ENCODE measurements at regions of chr17 and their contacts with region 1.

Region 1: DNA sequence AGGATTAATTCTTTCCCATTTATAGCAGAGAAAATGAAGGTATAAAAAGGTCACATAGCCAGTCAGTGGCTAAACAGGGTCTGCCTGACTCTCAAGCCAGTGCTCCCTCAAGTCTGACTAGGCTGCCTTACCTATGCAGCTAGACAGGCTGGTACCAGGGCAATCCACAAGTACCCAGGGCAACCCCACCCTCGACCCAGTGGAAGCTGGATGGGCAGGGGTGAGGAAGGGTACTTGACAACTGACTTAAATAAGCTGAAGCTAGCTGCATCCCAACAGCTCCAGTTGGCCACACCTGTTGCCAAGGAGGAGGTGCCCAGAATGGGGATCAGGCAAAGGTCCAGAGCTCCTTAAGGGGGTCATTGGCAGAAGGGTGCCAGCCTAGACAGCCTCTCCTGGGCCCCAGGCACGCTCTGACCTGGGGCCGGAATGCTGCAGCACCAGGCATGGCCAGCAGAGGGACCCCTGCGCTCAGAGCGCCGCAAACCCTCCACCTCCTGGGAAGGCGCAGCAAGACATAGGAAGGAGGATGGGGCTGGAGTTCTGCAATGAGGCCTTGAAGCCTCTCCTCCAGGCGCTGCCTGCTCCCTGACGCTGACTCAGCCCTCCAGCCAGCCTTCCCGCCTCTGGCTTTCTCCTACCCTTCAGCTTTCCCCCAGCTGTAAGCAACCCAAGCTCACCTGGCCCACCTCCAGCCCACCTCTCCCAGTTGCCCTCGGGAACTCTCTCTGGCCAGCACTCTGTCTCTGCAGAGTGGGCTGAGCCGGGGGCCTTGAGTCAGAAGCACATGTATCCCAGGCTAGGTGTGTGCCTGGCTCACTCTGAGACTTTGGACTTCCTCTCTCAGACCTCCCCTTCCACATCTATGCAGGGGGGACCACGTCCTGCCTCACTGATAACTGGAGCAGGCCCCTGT is 28.8 kb downstream of the MPP2 start:
- DNase-seq: peak; percentile 70 to 97
- H3K4me3 ChIP-seq: no peak overlapping the region
- H3K27ac ChIP-seq: no peak overlapping the region
- H3K4me1 ChIP-seq: peaks cover 0 to 8% (median 6%) of the 10 kb centered on the region in 4 experiments; a peak in 5 of 7 replicates
- H3K27me3 ChIP-seq: no peaks in the 10 kb centered on the region
- CTCF ChIP-seq: peak; percentile 93 to 99 (median 97)
- EP300 ChIP-seq: no peak
- POLR2A ChIP-seq: no peak
- RAD21 ChIP-seq: peak; percentile 82 to 88

Region 2: DNA sequence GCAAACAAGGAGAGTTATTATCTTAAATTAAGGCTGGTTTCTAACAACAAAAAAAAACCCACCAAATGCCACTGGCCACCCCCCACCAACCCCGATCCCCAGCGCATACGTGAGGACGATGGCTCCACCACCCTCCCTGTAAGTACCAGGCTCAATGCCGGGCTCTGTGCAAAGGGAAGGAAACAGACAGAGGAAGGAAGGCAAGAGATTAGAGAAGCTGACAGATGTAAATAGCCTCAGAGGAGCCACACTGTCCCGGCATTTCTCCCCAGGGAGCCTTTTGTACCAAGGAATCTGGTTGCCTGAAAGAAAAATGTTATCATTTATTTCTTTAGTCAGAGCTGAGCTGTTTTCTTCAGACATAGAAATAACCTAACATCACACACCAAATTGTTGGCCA is 133.0 kb before region 1 on chr17:
- CTCF ChIA-PET with region 1: no interaction called
- POLR2A ChIA-PET with region 1: no interaction called
- DNase-seq: no peak
- H3K4me3 ChIP-seq: no peak overlapping the region
- H3K27ac ChIP-seq: no peak overlapping the region
- H3K4me1 ChIP-seq: peaks cover 5 to 16% (median 8%) of the 10 kb centered on the region in 4 experiments; a peak in 6 of 7 replicates
- H3K27me3 ChIP-seq: no peaks in the 10 kb centered on the region
- CTCF ChIP-seq: no peak
- EP300 ChIP-seq: no peak
- POLR2A ChIP-seq: no peak
- RAD21 ChIP-seq: no peak

Region 3: DNA sequence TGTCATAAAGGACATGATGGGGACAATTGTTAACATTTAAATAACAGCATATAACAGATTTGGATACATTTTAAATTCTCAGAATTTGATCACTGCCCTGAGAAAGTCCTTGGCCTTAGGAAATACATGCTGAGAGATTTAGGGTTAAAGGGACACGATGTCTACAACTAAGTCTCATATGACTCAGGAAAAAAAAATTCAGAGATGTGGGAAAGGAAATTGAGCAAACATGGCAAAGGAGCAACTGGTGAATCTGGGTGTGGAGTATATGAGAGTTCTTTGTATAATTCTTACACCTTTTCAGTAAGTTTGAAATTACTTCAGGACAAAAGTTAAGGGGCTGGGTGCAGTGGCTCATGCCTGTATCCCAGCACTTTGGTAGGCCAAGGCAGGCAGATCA is 63.8 kb before region 1 on chr17:
- CTCF ChIA-PET with region 1: interaction called, 22 read pairs
- POLR2A ChIA-PET with region 1: no interaction called
- DNase-seq: no peak
- H3K4me3 ChIP-seq: no peak overlapping the region
- H3K27ac ChIP-seq: no peak overlapping the region
- H3K4me1 ChIP-seq: peaks cover 0 to 4% (median 1%) of the 10 kb centered on the region in 4 experiments; a peak in 1 of 7 replicates
- H3K27me3 ChIP-seq: no peaks in the 10 kb centered on the region
- CTCF ChIP-seq: no peak
- EP300 ChIP-seq: no peak
- POLR2A ChIP-seq: no peak
- RAD21 ChIP-seq: no peak

Region 4: GRCh38 chr17:43854453-43854852 is 24.1 kb before region 1 on chr17:
- CTCF ChIA-PET with region 1: interaction called, 30 read pairs
- POLR2A ChIA-PET with region 1: no interaction called
- DNase-seq: no peak
- H3K4me3 ChIP-seq: no peak overlapping the region
- H3K27ac ChIP-seq: no peak overlapping the region
- H3K4me1 ChIP-seq: peaks cover 0 to 4% (median under 1%) of the 10 kb centered on the region in 4 experiments; a peak in 3 of 7 replicates
- H3K27me3 ChIP-seq: no peaks in the 10 kb centered on the region
- CTCF ChIP-seq: no peak
- EP300 ChIP-seq: no peak
- POLR2A ChIP-seq: no peak
- RAD21 ChIP-seq: no peak

Region 5: DNA sequence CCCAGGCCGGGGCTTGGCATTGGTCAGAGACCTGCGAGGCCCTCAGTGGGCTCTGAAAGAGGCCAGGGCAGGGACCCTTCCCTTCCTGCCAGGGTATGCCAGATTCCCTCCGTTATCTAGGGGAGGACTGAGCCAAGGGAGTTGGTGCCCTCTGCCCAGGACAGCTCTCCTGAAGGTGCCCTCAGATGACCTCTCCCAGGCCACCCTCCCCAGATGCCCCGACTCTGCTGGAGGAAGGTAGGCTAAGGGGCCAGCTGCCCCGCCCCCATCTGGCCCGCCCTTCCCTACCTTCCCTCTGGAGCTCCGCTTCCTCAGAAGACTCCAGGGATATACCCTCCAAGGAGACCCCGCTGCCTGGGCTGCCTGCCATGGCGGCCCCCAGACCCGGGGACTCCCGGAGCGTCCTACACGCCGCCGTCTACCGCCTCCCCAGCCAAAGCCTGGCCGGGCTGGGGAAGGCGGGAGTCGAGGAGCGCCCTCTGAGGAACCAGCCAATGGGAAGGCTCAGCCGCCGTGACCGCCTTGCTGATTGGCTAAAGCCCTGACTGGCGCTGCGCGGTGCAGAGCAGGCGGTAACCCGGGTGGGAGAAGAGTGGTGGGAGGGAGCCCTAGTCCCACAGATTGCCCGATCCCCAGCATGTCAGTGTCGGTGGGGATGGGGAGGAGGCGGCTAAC is 21.8 kb after region 1 on chr17:
- CTCF ChIA-PET with region 1: interaction called, 403 read pairs
- POLR2A ChIA-PET with region 1: interaction called, 3 read pairs
- DNase-seq: peak in 1 of 2 experiments; percentile 95
- H3K4me3 ChIP-seq: peak overlapping the region; percentile 38 to 65 (median 48)
- H3K27ac ChIP-seq: no peak overlapping the region
- H3K4me1 ChIP-seq: peaks cover 0 to 39% (median 30%) of the 10 kb centered on the region in 4 experiments; a peak in 6 of 7 replicates
- H3K27me3 ChIP-seq: peaks cover 0 to 3% (median 3%) of the 10 kb centered on the region in 4 experiments; a peak in 4 of 7 replicates
- CTCF ChIP-seq: no peak
- EP300 ChIP-seq: no peak
- POLR2A ChIP-seq: no peak
- RAD21 ChIP-seq: no peak

Region 6: GRCh38 chr17:43940630-43941029 is 62.1 kb after region 1 on chr17:
- CTCF ChIA-PET with region 1: interaction called, 40 read pairs
- POLR2A ChIA-PET with region 1: no interaction called
- DNase-seq: peak in 1 of 2 experiments; percentile 83
- H3K4me3 ChIP-seq: no peak overlapping the region
- H3K27ac ChIP-seq: no peak overlapping the region
- H3K4me1 ChIP-seq: peaks cover 0 to 10% (median 5%) of the 10 kb centered on the region in 4 experiments; a peak in 6 of 7 replicates
- H3K27me3 ChIP-seq: peaks cover 1 to 29% (median 21%) of the 10 kb centered on the region in 4 experiments
- CTCF ChIP-seq: peak; percentile 72 to 83 (median 75)
- EP300 ChIP-seq: no peak
- POLR2A ChIP-seq: no peak
- RAD21 ChIP-seq: peak; percentile 59 to 74

Region 7: GRCh38 chr17:43994272-43995149 is 116.0 kb after region 1 on chr17:
- CTCF ChIA-PET with region 1: interaction called, 13 read pairs
- POLR2A ChIA-PET with region 1: no interaction called
- DNase-seq: peak in 1 of 2 experiments; percentile 92
- H3K4me3 ChIP-seq: peak overlapping the region; percentile 12 to 67 (median 42)
- H3K27ac ChIP-seq: no peak overlapping the region
- H3K4me1 ChIP-seq: peaks cover 0 to 2% (median 0%) of the 10 kb centered on the region in 4 experiments; a peak in 1 of 7 replicates
- H3K27me3 ChIP-seq: peaks cover 0 to 9% (median 4%) of the 10 kb centered on the region in 4 experiments; a peak in 5 of 7 replicates
- CTCF ChIP-seq: peak; percentile 81 to 97 (median 83)
- EP300 ChIP-seq: no peak
- POLR2A ChIP-seq: no peak
- RAD21 ChIP-seq: peak; percentile 91 to 94

Measured in H1 (cell line).